ENCODE measurements at regions of chr22 and their contacts with region 1.

Region 1: DNA sequence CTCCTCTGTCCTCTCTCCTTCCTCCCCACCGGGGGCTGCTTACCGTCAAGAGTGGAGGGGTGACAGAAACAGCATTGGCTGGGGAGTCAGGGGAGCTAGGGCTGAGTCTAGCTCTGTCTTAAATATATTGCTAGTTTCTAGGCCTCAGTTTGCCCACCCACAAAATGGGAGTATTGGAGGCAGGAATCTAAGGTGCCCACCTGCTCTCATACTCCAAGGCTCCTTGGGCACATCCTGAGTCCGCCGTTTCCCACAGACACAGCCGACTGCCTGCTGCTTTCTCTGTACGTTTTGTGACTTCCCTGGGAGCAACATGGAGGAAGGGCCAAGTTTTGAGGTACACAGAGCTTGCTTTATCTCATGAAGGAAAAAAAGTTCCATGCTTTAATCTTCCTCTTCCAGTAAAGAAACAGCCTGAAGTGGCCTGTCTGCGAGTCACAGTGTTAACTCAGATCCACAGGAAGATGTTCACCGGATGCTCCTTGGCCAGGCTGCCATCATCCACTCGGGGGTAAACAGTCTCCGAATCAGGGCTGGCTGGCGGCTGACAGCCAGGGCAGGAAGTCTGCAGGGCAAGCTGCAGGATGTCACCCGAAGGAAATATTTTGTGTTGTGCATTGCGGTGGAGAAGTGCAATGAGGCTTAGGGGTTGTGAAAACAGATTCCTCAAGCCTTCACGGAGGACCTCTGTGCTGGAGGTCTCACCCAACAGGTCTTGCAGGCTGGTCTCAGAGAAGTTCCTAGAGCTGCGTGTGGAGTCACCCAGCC is 11.0 kb upstream of the CERK start:
- DNase-seq: peak; percentile 88
- H3K4me3 ChIP-seq: no peak overlapping the region
- H3K27ac ChIP-seq: peak overlapping the region in 3 of 4 donors; percentile 40 to 62 (median 61)
- H3K4me1 ChIP-seq: peaks cover 0 to 49% (median 35%) of the 10 kb centered on the region in 4 donors
- H3K27me3 ChIP-seq: peaks cover 0 to 3% (median 0%) of the 10 kb centered on the region in 3 donors
- CTCF ChIP-seq: no peak
- EP300 ChIP-seq: peak in 1 of 4 donors; percentile 52
- POLR2A ChIP-seq: no peak

Region 2: GRCh38 chr22:46734830-46735453 is 14.2 kb before region 1 on chr22:
- intact Hi-C with region 1: loop called (anchors 1 kb)
- DNase-seq: no peak
- H3K4me3 ChIP-seq: no peak overlapping the region
- H3K27ac ChIP-seq: peak overlapping the region; percentile 81 to 90 (median 85)
- H3K4me1 ChIP-seq: peaks cover 0 to 90% (median 71%) of the 10 kb centered on the region in 4 donors
- H3K27me3 ChIP-seq: no peaks in the 10 kb centered on the region
- CTCF ChIP-seq: no peak
- EP300 ChIP-seq: no peak
- POLR2A ChIP-seq: no peak